ENCODE measurements at regions of chr3 and their contacts with region 1.

Region 1: GRCh38 chr3:75171630-75172230 is 492.4 kb upstream of the FRG2C start:
- DNase-seq: no peak
- H3K4me3 Mint-ChIP-seq: no peak overlapping the region
- H3K27ac Mint-ChIP-seq: no peak overlapping the region
- H3K4me1 Mint-ChIP-seq: no peaks in the 10 kb centered on the region
- H3K27me3 Mint-ChIP-seq: no peaks in the 10 kb centered on the region
- CTCF ChIP-seq: peak; percentile 19

Region 2: GRCh38 chr3:73868688-73869315 is 1302.9 kb before region 1 on chr3:
- CTCF ChIA-PET with region 1: no interaction called
- intact Hi-C with region 1: loop called (anchors 2 kb)
- DNase-seq: peak; percentile 11
- H3K4me3 Mint-ChIP-seq: no peak overlapping the region
- H3K27ac Mint-ChIP-seq: no peak overlapping the region
- H3K4me1 Mint-ChIP-seq: no peaks in the 10 kb centered on the region
- H3K27me3 Mint-ChIP-seq: no peaks in the 10 kb centered on the region
- CTCF ChIP-seq: no peak

Region 3: DNA sequence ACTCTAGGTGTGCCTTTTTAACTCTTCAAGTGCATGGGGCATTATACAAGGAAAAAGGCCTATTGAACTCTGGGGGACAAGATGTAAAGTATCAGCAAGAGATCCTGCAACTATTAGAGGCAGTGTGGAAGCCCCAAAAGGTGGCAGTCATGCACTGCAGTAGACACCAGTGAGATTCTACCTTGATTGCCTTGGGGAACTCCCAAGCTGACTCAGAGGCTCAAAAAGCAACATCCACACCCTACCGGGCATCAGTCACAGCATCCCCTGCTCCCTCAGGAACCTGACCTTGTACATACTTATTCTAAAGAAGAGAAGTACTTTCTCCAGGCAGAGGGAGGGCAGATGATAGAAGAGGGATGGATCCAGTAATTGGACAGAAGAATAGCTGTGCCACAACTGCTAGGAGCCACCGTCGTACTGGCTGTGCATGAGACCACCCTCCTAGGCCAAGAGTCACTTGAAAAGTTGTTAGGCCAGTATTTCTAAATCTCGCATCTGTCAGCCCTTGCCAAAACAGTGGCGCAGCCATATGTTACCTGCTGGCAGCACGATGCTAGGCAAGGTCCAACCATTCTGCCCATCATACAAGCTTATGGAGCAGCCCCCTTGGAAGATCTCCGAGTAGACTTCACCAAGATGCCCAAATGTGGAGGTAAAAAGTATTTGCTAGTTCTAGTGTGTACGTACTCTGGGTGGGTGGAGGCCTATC is 30.7 kb before region 1 on chr3:
- CTCF ChIA-PET with region 1: no interaction called
- intact Hi-C with region 1: loop called (anchors 1 kb)
- DNase-seq: peak; percentile 60
- H3K4me3 Mint-ChIP-seq: no peak overlapping the region
- H3K27ac Mint-ChIP-seq: no peak overlapping the region
- H3K4me1 Mint-ChIP-seq: peaks cover 21% of the 10 kb centered on the region
- H3K27me3 Mint-ChIP-seq: no peaks in the 10 kb centered on the region
- CTCF ChIP-seq: no peak

Region 4: GRCh38 chr3:75248974-75249373 is 77.2 kb after region 1 on chr3:
- CTCF ChIA-PET with region 1: no interaction called
- intact Hi-C with region 1: no loop called
- DNase-seq: no peak
- H3K4me3 Mint-ChIP-seq: no peak overlapping the region
- H3K27ac Mint-ChIP-seq: no peak overlapping the region
- H3K4me1 Mint-ChIP-seq: peaks cover 15% of the 10 kb centered on the region
- H3K27me3 Mint-ChIP-seq: no peaks in the 10 kb centered on the region
- CTCF ChIP-seq: no peak

Measured in Calu3 (cell line).